Endothelial cell of umbilical vein (primary cell): ENCODE measurements at regions of chr1 and their contacts with region 1.

Region 1: DNA sequence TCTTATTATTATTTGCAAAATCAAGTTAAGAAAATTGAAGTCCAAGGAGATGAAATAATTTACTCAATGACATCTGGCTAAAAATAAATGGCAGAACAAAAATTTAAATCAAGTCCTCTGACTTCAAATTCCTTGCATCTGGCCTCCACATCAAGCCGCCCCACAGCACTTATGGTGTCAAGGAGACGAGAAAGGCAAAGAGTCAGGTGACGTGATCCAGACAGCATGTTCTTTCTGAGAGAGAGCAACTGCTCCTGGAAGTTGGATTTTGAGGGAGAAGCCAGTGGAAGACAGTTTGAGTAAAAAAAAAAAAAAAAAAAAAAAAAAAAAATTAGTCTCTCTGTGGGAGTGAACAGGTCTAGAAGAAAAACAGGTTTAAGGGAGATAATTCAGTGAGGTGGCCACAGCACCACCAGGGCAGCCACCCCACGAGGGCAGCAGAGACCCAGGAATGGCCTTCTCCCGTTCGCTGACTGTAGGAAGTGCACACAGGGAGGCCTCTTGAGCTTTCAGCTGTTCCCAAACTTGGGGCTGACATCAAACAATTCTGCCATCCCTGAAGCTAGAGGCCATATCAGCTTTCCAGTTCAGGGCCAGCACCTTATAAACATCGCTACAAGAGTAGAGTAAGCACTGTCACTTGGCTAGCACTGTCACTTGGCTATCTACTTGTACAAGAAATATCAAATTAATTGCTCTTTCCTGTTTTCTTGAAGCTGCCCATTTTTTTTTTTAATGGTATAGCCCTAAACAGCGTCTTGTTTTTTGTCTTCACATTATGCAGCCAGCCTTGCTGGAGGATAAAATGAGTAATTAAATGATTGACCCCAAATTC is 7.8 kb downstream of the C1orf162 start:
- DNase-seq: peak; percentile 62
- H3K4me3 ChIP-seq: no peak overlapping the region
- H3K27ac ChIP-seq: no peak overlapping the region
- H3K4me1 ChIP-seq: no peaks in the 10 kb centered on the region
- H3K27me3 ChIP-seq: peaks cover 0 to 2% of the 10 kb centered on the region in 2 experiments
- CTCF ChIP-seq: peak; percentile 57 to 70
- POLR2A ChIP-seq: no peak

Region 2: DNA sequence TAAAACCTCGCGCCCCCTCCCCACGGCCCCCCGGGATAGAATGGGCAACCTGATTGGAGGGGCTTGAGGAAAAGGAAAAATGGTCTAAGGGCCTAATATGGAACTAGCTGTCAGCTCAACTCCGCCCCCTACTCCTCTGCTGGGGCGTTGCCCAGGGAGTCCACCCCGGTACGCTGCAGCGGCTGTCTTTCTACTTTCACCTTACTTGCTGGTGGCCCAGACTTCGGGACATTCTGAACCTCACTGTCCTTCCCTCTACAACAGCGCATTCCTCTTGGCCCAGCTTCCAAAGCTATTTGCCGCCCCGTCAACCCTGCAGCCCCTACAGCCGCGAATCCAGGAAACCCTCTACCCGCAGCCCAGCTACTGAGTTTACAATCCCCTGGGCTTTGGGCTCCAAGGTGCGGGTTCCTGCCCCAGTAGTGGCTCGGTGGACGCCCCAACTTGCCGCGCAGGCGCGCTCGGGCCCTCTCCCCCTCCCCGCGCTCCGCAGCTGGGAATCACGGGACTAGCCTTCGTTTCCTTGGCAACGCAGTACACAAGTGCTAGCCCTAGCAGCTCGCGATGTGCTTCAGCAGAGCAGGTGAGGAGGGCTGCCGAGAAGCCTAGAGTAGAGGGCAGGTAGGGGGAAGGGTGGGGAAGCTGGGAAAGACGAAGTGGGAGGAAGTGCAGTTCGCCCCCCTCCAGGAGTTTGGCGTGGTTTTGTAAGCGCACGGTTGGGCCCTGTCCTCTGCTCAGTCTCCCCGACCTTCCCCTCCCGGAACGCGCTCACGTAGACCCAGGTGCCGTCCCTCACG is 135.3 kb before region 1 on chr1:
- CTCF ChIA-PET with region 1: no interaction called
- POLR2A ChIA-PET with region 1: no interaction called
- dilution Hi-C with region 1: no loop called
- intact Hi-C with region 1: no loop called
- DNase-seq: peak; percentile 81
- H3K4me3 ChIP-seq: peak overlapping the region; percentile 0 to 41 (median 8)
- H3K27ac ChIP-seq: no peak overlapping the region
- H3K4me1 ChIP-seq: no peaks in the 10 kb centered on the region
- H3K27me3 ChIP-seq: peaks cover 4 to 7% of the 10 kb centered on the region in 2 experiments
- CTCF ChIP-seq: peak in 1 of 2 donors; percentile 7
- POLR2A ChIP-seq: no peak

Region 3: GRCh38 chr1:111656086-111657017 is 174.7 kb after region 1 on chr1:
- CTCF ChIA-PET with region 1: interaction called, 6 read pairs
- POLR2A ChIA-PET with region 1: no interaction called
- dilution Hi-C with region 1: no loop called
- intact Hi-C with region 1: loop called (anchors 1 kb)
- DNase-seq: peak; percentile 67
- H3K4me3 ChIP-seq: no peak overlapping the region
- H3K27ac ChIP-seq: no peak overlapping the region
- H3K4me1 ChIP-seq: no peaks in the 10 kb centered on the region
- H3K27me3 ChIP-seq: no peaks in the 10 kb centered on the region
- CTCF ChIP-seq: peak; percentile 16 to 35
- POLR2A ChIP-seq: no peak

Region 4: GRCh38 chr1:111747282-111747734 is 265.7 kb after region 1 on chr1:
- CTCF ChIA-PET with region 1: interaction called, 54 read pairs
- POLR2A ChIA-PET with region 1: no interaction called
- dilution Hi-C with region 1: no loop called
- intact Hi-C with region 1: loop called (anchors 1 kb)
- DNase-seq: peak; percentile 71
- H3K4me3 ChIP-seq: no peak overlapping the region
- H3K27ac ChIP-seq: no peak overlapping the region
- H3K4me1 ChIP-seq: peaks cover 2% of the 10 kb centered on the region
- H3K27me3 ChIP-seq: no peaks in the 10 kb centered on the region
- CTCF ChIP-seq: peak; percentile 82 to 89
- POLR2A ChIP-seq: no peak

Region 5: GRCh38 chr1:111769517-111770146 is 288.0 kb after region 1 on chr1:
- CTCF ChIA-PET with region 1: interaction called, 59 read pairs
- POLR2A ChIA-PET with region 1: no interaction called
- dilution Hi-C with region 1: no loop called
- intact Hi-C with region 1: loop called (anchors 1 kb)
- DNase-seq: peak; percentile 70
- H3K4me3 ChIP-seq: no peak overlapping the region
- H3K27ac ChIP-seq: no peak overlapping the region
- H3K4me1 ChIP-seq: no peaks in the 10 kb centered on the region
- H3K27me3 ChIP-seq: no peaks in the 10 kb centered on the region
- CTCF ChIP-seq: peak; percentile 51 to 62
- POLR2A ChIP-seq: peak; percentile 18

Region 6: GRCh38 chr1:112337028-112337531 is 855.5 kb after region 1 on chr1:
- CTCF ChIA-PET with region 1: interaction called, 13 read pairs
- POLR2A ChIA-PET with region 1: no interaction called
- dilution Hi-C with region 1: no loop called
- intact Hi-C with region 1: no loop called
- DNase-seq: peak; percentile 56
- H3K4me3 ChIP-seq: no peak overlapping the region
- H3K27ac ChIP-seq: no peak overlapping the region
- H3K4me1 ChIP-seq: no peaks in the 10 kb centered on the region
- H3K27me3 ChIP-seq: peaks cover 15 to 24% of the 10 kb centered on the region in 2 experiments
- CTCF ChIP-seq: peak; percentile 60 to 81
- POLR2A ChIP-seq: no peak